ENCODE measurements at regions of chr18 and their contacts with region 1.

Region 1: GRCh38 chr18:63427558-63427957 is 5.3 kb upstream of the VPS4B start:
- DNase-seq: peak; percentile 64 to 99
- H3K4me3 ChIP-seq: no peak overlapping the region; the same call in 1 of the 2 replicates
- H3K27ac ChIP-seq: peak overlapping the region; percentile 93
- H3K4me1 ChIP-seq: peaks cover 26% of the 10 kb centered on the region
- H3K27me3 ChIP-seq: no peaks in the 10 kb centered on the region
- CTCF ChIP-seq: no peak

Region 2: GRCh38 chr18:62357079-62357719 is 1070.4 kb before region 1 on chr18:
- CTCF ChIA-PET with region 1: no interaction called
- POLR2A ChIA-PET with region 1: no interaction called
- intact Hi-C with region 1: no loop called
- DNase-seq: no peak
- H3K4me3 ChIP-seq: no peak overlapping the region
- H3K27ac ChIP-seq: no peak overlapping the region
- H3K4me1 ChIP-seq: no peaks in the 10 kb centered on the region
- H3K27me3 ChIP-seq: no peaks in the 10 kb centered on the region
- CTCF ChIP-seq: no peak

Region 3: DNA sequence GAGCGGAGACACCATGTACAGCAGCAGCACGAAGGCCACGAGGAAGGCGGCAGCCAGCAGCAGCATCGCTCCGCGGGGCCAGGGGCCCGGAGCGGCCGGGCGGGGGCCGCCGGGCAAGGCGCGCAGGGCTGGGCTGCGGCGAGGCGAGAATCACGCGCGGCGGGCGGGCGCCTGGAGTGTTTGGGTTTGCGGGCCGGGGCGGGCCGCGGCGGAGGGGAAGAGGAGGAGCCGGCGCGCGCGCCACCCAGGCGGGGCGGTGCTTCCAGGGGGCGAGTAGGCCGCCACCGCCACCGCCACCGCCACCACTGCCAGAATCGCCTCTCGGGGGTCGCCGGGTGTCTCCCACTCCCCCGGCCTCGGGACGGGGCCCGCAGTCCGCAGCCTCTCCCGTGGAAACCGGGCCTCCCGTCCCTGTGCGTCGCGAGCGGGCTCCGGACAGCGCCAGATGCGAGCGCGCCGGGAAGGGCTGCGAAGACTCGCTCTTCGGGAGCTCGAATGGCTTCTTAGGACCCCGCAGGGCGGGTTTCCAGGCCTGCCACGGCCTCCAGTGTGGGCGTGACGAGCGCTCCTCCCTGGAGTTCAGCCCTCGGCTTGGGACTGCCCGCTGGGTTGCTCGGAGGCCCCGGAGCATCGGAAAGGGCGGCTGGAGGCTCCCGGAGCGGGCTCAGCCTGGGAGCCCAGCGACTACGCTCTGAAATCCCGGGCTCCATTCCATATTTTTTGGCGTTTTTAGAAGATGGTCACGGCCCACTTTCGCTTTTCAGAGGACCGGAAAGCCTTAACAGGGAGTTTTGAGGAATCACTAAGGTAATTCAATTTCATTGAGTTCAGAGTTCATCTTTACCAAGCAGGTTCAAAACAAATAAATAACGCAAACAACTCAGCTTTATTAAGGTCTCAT is 60.3 kb before region 1 on chr18 and contains the start of gene KDSR:
- CTCF ChIA-PET with region 1: no interaction called
- POLR2A ChIA-PET with region 1: interaction called, 4 read pairs
- intact Hi-C with region 1: loop called (anchors 1 kb)
- DNase-seq: peak; percentile 94 to 95
- H3K4me3 ChIP-seq: peak within 1 kb of the TSS; percentile 99
- H3K27ac ChIP-seq: peak within 1 kb of the TSS; percentile 71
- H3K4me1 ChIP-seq: peaks cover 20% of the 10 kb centered on the region
- H3K27me3 ChIP-seq: no peaks in the 10 kb centered on the region
- CTCF ChIP-seq: no peak
- total RNA-seq, gene KDSR: 33.8 and 41.7 TPM in 2 replicates

Region 4: DNA sequence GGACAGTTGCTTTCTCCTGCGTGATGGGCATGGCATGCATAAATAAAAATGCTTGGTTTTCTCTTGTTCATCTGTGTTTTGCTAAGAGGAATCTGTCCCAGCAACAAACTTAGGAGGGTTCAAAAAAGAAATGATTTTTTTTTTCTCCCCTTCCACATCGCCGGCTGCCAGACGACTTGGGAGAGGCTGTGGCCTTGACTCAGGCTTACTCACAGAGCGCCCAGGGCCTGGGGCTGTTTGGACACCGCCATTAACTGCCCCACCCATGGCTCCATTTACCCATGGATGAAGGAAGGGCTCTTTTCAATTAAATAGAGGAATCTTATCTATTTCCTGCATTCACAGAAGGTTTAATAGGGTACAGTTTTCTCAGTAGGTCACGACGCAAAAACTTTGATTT is 26.9 kb after region 1 on chr18:
- CTCF ChIA-PET with region 1: no interaction called
- POLR2A ChIA-PET with region 1: no interaction called
- intact Hi-C with region 1: loop called (anchors 1 kb)
- DNase-seq: peak; percentile 76 to 93
- H3K4me3 ChIP-seq: peak overlapping the region; percentile 15; the same call in 1 of the 2 replicates
- H3K27ac ChIP-seq: peak overlapping the region; percentile 86
- H3K4me1 ChIP-seq: peaks cover 52% of the 10 kb centered on the region
- H3K27me3 ChIP-seq: no peaks in the 10 kb centered on the region
- CTCF ChIP-seq: no peak

Region 5: DNA sequence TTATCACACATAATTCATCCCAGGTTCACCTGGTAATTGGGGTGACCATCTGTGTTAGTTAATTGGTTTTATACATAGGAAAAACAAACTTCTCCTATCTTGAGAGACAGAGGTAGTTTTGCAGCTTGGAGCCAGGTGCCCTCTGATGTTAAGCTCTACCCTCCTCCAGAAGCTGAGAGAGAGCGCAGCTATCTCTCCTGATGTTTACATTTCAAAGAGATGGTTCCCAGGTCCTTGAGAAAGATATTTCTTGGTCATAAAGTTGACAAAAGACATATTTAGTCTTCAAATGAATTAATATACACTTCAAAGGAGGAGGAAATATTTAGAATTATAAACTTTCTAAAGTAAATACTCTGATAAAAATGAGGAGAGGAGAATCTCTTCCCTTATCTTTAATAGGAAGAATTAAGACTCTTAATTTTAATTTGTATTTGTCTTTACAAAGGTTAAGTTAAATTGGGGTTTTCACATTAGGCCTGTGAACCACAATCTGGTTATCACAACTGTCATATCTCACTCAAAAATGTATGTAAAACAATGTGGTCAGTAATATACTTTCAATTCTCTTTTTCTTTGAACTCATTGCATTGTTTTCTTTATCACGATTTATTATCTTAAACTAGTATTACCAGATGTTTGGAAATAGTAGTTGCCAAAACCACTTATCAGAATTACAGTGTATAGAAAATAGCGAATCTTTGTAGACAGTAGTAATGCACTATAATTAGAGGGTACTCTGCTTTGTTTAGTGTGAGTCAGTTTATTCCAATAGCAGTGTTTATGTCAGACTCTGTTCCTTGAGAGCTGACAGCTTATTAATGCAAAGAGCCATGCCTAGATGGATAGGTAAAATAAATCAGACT is 189.7 kb after region 1 on chr18:
- CTCF ChIA-PET with region 1: no interaction called
- POLR2A ChIA-PET with region 1: no interaction called
- intact Hi-C with region 1: no loop called
- DNase-seq: no peak
- H3K4me3 ChIP-seq: no peak overlapping the region
- H3K27ac ChIP-seq: no peak overlapping the region
- H3K4me1 ChIP-seq: no peaks in the 10 kb centered on the region
- H3K27me3 ChIP-seq: no peaks in the 10 kb centered on the region
- CTCF ChIP-seq: no peak

Region 6: GRCh38 chr18:64202210-64202836 is 774.8 kb after region 1 on chr18:
- CTCF ChIA-PET with region 1: no interaction called
- POLR2A ChIA-PET with region 1: no interaction called
- intact Hi-C with region 1: no loop called
- DNase-seq: no peak
- H3K4me3 ChIP-seq: no peak overlapping the region
- H3K27ac ChIP-seq: no peak overlapping the region
- H3K4me1 ChIP-seq: peaks cover 9% of the 10 kb centered on the region; the same call in 1 of the 2 replicates
- H3K27me3 ChIP-seq: no peaks in the 10 kb centered on the region
- CTCF ChIP-seq: no peak